ENCODE measurements at regions of chr10 and their contacts with region 1.

Region 1: DNA sequence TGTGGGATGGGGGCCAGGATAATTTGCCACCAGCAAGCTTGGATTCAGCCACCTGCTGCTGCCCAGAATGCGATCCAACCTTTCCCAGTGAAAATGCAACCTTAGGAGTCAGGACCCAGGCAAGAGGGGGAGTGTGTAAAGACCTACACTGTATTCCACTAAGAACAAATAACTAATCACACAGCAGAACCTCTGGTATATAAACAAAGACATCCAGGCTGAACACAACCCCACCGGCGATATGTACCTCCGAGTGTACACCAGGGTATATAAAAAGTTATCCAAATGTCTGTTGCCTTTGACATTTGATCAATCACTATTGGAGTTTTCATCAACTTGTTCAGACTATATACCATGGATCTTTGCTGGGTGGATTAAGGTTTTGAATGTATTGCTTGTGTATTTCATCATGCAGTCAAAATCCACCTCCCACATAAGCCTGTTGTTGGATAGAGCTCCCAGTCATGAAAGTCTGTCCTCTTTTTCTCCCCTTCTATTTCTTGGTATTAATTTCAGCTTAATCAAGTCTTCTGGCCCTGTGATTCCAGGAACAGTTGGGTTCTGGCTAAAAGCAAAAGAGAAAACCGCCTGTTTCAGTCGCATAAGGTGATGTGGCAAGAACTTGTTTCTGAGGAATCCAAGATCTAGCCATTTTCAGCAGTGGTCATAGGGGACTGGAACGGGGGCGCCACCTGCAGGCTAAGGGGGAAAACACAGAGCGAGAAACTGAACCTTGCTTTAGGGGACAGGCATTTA is 290.7 kb downstream of the CCDC3 start:
- DNase-seq: peak; percentile 92
- H3K4me3 Mint-ChIP-seq: no peak overlapping the region
- H3K27ac Mint-ChIP-seq: peak overlapping the region; percentile 77
- H3K4me1 Mint-ChIP-seq: peaks cover 72% of the 10 kb centered on the region
- H3K27me3 Mint-ChIP-seq: no peaks in the 10 kb centered on the region

Region 2: DNA sequence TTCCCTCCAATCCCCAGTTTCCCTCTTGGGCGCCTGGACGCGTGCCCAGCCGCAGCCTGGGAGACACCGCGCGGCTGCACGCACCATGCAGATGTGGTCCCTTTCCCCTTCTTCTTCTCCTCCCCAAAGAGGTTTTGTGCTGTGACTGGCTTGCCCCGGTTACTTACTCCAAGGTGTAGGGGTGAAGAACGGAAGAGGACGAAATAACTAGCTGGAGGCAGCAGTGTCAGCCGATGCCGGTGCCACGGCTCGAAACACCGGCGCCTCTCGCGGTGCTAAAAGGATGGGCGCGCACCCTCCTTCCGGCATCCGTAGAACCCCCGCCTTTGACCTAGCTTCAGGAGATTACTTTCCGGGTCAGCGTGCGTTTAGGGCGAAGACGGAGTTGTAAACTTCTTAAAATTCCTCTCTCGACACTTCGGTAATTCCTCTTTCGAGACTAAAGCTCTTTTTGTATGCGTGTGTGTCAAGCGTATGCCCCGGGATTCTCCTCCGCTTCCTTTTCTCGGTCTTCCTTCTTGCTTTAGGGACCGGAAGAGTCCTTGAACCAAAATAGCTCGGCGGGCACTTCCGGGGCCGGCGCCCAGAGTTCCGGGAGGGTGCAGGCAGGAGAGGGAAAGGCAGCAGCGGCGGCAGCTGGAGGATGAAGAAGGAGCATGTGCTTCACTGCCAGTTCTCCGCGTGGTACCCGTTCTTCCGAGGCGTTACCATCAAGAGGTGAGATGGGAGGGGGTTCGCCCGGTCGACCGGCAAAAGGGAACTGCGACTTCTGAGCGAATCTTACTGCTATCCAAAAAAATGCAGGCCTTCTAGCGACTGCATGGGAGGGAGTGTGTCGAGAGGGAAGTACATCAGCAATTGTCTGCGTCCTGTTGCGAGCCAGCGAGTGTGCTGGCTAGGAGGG is 514.9 kb before region 1 on chr10 and contains the starts of genes CDC123 and NUDT5:
- CTCF ChIA-PET with region 1: interaction called, 3 read pairs
- POLR2A ChIA-PET with region 1: no interaction called
- intact Hi-C with region 1: loop called (anchors 5 kb)
- DNase-seq: peak; percentile 93
- H3K4me3 Mint-ChIP-seq: peak within 1 kb of the TSS; percentile 94
- H3K27ac Mint-ChIP-seq: peak within 1 kb of the TSS; percentile 100
- H3K4me1 Mint-ChIP-seq: peaks cover 46% of the 10 kb centered on the region
- H3K27me3 Mint-ChIP-seq: no peaks in the 10 kb centered on the region
- total RNA-seq, gene CDC123: 134 TPM
- total RNA-seq, gene NUDT5: 115 to 118 TPM

Region 3: DNA sequence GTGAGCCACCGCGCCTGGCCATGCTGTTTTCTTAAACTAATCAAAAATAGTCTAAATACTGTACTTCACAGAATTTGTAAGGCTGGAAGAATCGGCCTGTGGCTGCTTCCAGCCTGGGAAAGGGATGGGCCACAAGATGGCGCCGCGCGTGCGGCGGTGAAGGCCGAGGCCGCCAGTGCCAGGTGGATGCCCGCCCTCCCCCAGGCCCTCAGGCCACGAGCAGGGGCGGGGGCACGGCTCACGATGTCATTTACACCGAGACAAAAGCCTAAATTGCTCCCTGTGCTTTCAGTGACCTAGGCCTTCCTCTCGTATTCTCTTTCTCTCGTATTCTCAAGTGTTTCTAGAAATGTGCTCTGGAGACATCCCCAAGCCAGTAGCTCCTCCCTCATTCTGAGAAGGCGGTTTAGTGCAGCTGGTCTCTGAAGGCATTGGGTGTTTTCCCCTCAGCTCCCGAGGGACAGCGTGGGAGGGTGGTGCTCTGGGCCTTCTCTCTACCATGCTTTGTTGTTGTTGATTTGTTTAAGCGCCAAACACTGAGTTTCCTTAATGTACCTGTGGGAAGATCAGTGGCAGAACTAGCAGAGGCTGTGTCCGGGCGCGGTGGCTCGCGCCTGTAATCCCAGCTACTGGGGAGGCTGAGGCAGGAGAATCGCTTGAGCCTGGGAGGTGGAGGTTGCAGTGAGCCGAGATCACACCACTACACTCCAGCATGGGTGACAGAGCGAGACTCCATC is 446.4 kb before region 1 on chr10:
- CTCF ChIA-PET with region 1: interaction called, 10 read pairs
- POLR2A ChIA-PET with region 1: no interaction called
- intact Hi-C with region 1: loop called (anchors 1 kb)
- DNase-seq: peak; percentile 87
- H3K4me3 Mint-ChIP-seq: peak overlapping the region; percentile 47
- H3K27ac Mint-ChIP-seq: peak overlapping the region; percentile 82
- H3K4me1 Mint-ChIP-seq: peaks cover 19% of the 10 kb centered on the region
- H3K27me3 Mint-ChIP-seq: no peaks in the 10 kb centered on the region

Region 4: GRCh38 chr10:12656518-12657142 is 54.1 kb before region 1 on chr10:
- CTCF ChIA-PET with region 1: interaction called, 31 read pairs
- POLR2A ChIA-PET with region 1: no interaction called
- intact Hi-C with region 1: loop called (anchors 1 kb)
- DNase-seq: no peak
- H3K4me3 Mint-ChIP-seq: no peak overlapping the region
- H3K27ac Mint-ChIP-seq: no peak overlapping the region
- H3K4me1 Mint-ChIP-seq: peaks cover 29% of the 10 kb centered on the region
- H3K27me3 Mint-ChIP-seq: no peaks in the 10 kb centered on the region

Region 5: DNA sequence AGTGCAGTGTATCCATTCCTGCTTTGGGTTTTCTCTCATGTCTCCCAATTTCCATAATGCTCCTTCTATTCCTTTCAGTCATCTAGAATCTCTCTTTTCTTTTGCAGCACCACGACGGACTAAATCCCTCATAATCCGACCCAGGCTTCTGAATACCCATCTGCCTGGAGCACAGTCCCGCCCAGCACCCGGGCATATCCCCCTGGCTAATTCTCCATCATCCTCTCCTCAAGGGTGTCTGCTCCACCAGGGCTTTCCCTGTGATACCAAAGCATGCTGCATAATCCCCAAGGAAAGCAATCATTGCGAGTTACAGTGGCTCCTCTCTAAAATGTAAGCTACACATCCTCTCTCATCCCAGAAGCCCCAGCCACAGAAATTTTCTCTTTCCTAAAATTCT is 31.1 kb before region 1 on chr10:
- CTCF ChIA-PET with region 1: no interaction called
- POLR2A ChIA-PET with region 1: no interaction called
- intact Hi-C with region 1: no loop called
- DNase-seq: no peak
- H3K4me3 Mint-ChIP-seq: no peak overlapping the region
- H3K27ac Mint-ChIP-seq: no peak overlapping the region
- H3K4me1 Mint-ChIP-seq: peaks cover 6% of the 10 kb centered on the region
- H3K27me3 Mint-ChIP-seq: no peaks in the 10 kb centered on the region

Region 6: DNA sequence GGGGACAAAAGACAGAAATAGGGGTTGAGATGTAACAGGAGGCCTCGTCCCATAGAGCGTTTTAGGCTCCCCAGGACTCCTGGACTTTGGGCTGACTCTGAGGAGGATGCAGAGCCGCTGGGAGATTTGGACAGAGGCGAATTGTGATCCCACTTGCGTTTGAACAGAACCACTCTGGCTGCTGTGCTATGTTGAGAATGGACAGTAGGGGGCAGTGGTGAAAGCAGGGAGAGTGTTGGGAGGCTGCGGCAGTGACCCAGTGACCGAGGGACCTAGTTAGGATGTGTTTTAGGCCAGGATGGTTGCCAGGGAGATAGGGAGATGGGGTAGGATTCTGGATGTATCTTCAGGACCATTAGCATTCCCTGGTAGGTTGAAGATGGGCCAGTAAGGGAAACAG is 19.1 kb after region 1 on chr10:
- CTCF ChIA-PET with region 1: interaction called, 16 read pairs
- POLR2A ChIA-PET with region 1: interaction called, 14 read pairs
- intact Hi-C with region 1: loop called (anchors 1 kb)
- DNase-seq: peak; percentile 34
- H3K4me3 Mint-ChIP-seq: no peak overlapping the region
- H3K27ac Mint-ChIP-seq: no peak overlapping the region
- H3K4me1 Mint-ChIP-seq: peaks cover 21% of the 10 kb centered on the region
- H3K27me3 Mint-ChIP-seq: no peaks in the 10 kb centered on the region

Region 7: GRCh38 chr10:12902135-12902572 is 191.4 kb after region 1 on chr10:
- CTCF ChIA-PET with region 1: interaction called, 85 read pairs
- POLR2A ChIA-PET with region 1: no interaction called
- intact Hi-C with region 1: loop called (anchors 1 kb)
- DNase-seq: peak; percentile 57
- H3K4me3 Mint-ChIP-seq: no peak overlapping the region
- H3K27ac Mint-ChIP-seq: no peak overlapping the region
- H3K4me1 Mint-ChIP-seq: no peaks in the 10 kb centered on the region
- H3K27me3 Mint-ChIP-seq: peaks cover 16% of the 10 kb centered on the region

Region 8: DNA sequence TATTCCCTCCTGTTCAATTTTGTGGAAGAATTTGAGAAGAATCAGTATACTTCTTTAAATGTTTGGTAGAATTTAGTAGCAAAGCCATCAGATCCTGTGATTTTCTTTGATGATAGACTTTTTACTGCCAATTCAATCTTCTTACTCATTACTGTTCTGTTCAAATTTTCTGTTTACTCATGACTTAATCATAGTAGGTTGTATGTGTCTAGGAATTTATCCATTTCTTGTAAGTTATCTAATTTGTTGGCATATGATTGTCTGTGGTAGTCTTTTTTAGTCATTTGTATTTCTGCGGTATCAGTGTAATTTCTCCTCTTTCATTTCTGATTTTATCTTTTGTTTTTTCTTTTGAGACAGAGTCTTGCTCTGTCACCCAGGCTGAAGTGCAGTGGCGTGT is 203.3 kb after region 1 on chr10:
- CTCF ChIA-PET with region 1: no interaction called
- POLR2A ChIA-PET with region 1: no interaction called
- intact Hi-C with region 1: no loop called
- DNase-seq: no peak
- H3K4me3 Mint-ChIP-seq: no peak overlapping the region
- H3K27ac Mint-ChIP-seq: no peak overlapping the region
- H3K4me1 Mint-ChIP-seq: peaks cover 10% of the 10 kb centered on the region
- H3K27me3 Mint-ChIP-seq: peaks cover 13% of the 10 kb centered on the region

Region 9: DNA sequence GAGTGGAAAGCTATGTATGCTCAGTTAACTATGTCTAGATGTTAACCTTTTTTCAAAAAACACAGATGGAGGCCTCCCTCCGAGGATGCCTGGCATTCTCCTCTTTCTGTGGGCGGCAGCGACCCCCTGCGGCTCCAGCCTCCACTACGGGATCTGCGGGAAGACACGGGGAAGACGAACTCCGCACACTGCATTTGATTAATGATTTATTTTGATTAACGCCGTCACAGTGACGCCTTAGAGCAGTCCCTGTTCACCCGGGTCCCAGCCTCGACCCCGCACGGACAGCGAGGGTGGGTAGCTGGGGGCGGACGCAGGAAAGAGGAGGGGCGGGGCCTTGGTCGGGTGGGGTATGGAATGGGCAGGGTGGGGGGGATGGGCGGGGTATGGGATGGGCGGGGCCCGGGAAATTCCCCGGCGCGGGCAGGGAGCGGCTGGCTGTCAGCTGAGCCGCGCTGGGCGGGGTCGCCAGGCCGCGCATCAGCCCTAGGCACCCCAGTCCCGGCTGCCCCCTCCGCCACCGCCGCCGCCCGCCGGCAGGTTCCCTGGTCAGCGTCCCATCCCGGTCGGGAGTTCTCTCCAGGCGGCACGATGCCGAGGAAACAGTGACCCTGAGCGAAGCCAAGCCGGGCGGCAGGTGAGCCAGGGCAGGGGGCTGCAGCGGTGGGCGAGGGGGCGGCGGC is 389.0 kb after region 1 on chr10 and contains the start of gene OPTN:
- CTCF ChIA-PET with region 1: interaction called, 13 read pairs
- POLR2A ChIA-PET with region 1: no interaction called
- intact Hi-C with region 1: loop called (anchors 5 kb)
- DNase-seq: peak; percentile 87
- H3K4me3 Mint-ChIP-seq: peak within 1 kb of the TSS; percentile 89
- H3K27ac Mint-ChIP-seq: peak within 1 kb of the TSS; percentile 86
- H3K4me1 Mint-ChIP-seq: peaks cover 39% of the 10 kb centered on the region
- H3K27me3 Mint-ChIP-seq: no peaks in the 10 kb centered on the region
- total RNA-seq, gene OPTN: 107 to 113 TPM